A549 (cell line): ENCODE measurements at regions of chr1 and their contacts with region 1.

Region 1: DNA sequence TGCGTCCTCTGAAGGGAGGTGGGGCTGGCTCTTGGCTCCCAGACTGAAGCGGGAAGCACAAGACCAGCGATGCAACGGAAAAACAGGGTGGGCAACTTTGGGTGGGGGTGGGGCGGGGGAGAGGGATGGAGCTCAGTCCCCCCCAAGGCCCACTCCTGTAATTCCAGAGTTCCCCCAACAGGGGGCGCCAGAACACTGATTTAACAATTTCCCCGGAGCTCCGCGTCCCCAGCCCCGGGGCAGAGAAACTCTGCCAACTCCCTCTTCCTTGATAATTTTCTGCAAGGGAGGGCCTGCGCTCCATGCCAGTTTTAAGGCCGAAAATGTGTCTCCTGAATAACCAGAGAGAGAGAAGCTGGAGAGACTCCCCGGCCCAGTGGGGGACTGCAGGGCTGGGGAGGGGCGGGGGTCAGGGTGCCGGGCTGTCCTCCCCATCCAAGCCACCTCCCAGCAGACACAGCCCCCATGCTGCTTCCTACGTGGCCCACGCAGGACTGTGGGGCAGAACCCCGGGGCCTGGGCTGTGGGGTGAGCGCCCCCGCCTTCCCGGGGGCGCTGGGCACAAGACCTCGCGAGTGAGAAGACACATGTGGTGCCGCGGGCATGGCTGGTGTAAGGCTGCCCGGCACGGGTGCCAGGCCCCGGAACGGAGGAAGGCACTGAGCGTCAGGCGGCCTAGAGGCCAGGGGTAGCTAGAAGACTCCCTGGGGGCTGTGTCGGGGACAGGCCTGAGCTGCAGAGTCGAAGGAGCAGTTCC is 51.4 kb downstream of the KIF21B start:
- DNase-seq: peak; percentile 37 to 76
- ATAC-seq: peak in 1 of 2 experiments; percentile 47; a peak in 3 of 6 replicates
- H3K4me3 ChIP-seq: no peak overlapping the region
- H3K27ac ChIP-seq: peak overlapping the region; percentile 63 to 76
- H3K4me1 ChIP-seq: peaks cover 31% of the 10 kb centered on the region
- CTCF ChIP-seq: peak; percentile 89
- EP300 ChIP-seq: no peak
- POLR2A ChIP-seq: no peak
- RAD21 ChIP-seq: peak; percentile 77 to 90

Region 2: GRCh38 chr1:200620273-200621131 is 351.6 kb before region 1 on chr1 and contains the start of gene KIF14:
- CTCF ChIA-PET with region 1: interaction called, 16 read pairs
- POLR2A ChIA-PET with region 1: interaction called, 3 read pairs
- DNase-seq: peak; percentile 93 to 97
- ATAC-seq: peak; percentile 99 to 100
- H3K4me3 ChIP-seq: peak within 1 kb of the TSS; percentile 86
- H3K27ac ChIP-seq: peak within 1 kb of the TSS; percentile 79 to 91
- H3K4me1 ChIP-seq: peaks cover 12% of the 10 kb centered on the region; the same call in 2 of the 3 replicates
- CTCF ChIP-seq: no peak
- EP300 ChIP-seq: no peak
- POLR2A ChIP-seq: no peak
- RAD21 ChIP-seq: no peak
- polyA plus RNA-seq, gene KIF14: 13.5 and 20.4 TPM in 2 replicates

Region 3: DNA sequence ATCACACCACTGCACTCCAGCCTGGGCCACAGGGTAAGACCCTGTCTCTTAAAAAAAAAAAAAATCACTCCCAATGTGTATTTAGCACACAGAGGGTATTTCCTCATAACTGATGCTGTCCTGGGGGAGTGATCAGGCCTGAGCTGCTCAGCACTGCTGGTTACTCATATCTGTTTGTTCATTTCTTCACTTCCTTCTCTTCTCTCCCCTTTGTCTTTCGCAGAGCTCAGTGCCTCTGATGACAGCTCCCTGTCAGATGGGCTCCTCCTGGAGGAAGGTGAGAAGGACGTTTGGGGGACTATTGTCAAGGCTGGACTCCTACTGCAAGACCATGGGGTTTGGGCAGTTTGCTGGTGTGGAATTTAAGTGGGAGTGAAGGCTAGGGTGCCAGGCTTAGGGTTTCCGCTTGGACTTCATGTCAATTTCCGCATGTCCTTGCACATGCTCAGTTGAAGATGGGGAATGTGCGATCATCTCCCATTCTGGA is 64.5 kb before region 1 on chr1:
- CTCF ChIA-PET with region 1: interaction called, 10 read pairs
- POLR2A ChIA-PET with region 1: no interaction called
- DNase-seq: peak in 1 of 2 experiments; percentile 79
- ATAC-seq: peak; percentile 82 to 91
- H3K4me3 ChIP-seq: no peak overlapping the region
- H3K27ac ChIP-seq: peak overlapping the region; percentile 77 to 82
- H3K4me1 ChIP-seq: peaks cover 76% of the 10 kb centered on the region
- CTCF ChIP-seq: no peak
- EP300 ChIP-seq: peak in 1 of 2 experiments; percentile 48; a peak in 1 of 5 replicates
- POLR2A ChIP-seq: no peak
- RAD21 ChIP-seq: no peak; a peak in 2 of 5 replicates

Region 4: GRCh38 chr1:200951016-200951415 is 21.1 kb before region 1 on chr1:
- CTCF ChIA-PET with region 1: interaction called, 23 read pairs
- POLR2A ChIA-PET with region 1: no interaction called
- DNase-seq: no peak
- ATAC-seq: no peak
- H3K4me3 ChIP-seq: no peak overlapping the region
- H3K27ac ChIP-seq: no peak overlapping the region
- H3K4me1 ChIP-seq: no peaks in the 10 kb centered on the region
- CTCF ChIP-seq: no peak
- EP300 ChIP-seq: no peak
- POLR2A ChIP-seq: no peak
- RAD21 ChIP-seq: no peak

Region 5: GRCh38 chr1:201006450-201006849 is 34.3 kb after region 1 on chr1:
- CTCF ChIA-PET with region 1: interaction called, 21 read pairs
- POLR2A ChIA-PET with region 1: no interaction called
- DNase-seq: peak in 1 of 2 experiments; percentile 21
- ATAC-seq: peak in 1 of 2 experiments; percentile 36; a peak in 2 of 6 replicates
- H3K4me3 ChIP-seq: no peak overlapping the region
- H3K27ac ChIP-seq: no peak overlapping the region
- H3K4me1 ChIP-seq: no peaks in the 10 kb centered on the region
- CTCF ChIP-seq: no peak
- EP300 ChIP-seq: no peak
- POLR2A ChIP-seq: no peak
- RAD21 ChIP-seq: no peak

Region 6: DNA sequence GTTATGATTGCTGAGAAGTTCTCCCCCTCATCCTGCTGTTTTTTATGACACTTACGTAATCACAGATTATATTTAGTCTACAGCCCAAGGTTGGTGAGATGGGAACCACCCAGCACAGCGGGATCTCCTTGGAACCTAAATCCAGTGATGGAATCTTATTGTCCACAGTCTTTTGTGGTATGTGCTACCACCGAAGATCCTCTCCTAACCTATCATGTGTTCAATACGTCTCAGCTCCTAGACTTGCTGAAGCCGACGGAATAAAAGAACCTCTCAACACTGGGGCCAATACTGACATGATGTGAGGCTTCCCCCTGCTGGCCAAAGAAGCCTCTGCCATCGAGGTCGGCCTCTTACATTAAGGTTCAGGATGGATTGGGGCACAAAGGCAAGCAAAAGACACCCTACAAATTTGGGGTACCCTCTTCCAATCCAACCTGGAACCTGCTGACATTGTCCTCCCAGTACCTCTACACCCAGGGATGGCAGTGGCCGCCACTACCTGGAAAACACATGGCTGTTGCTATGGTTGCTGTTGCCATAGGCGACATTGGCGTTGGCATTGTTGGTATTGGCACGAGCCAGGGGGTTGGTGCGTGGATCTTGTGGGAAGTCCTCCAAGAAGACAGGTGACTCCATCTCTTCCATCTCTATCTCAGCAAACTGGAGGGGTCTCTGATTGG is 70.8 kb after region 1 on chr1:
- CTCF ChIA-PET with region 1: interaction called, 82 read pairs
- POLR2A ChIA-PET with region 1: no interaction called
- DNase-seq: peak; percentile 67 to 78
- ATAC-seq: peak; percentile 85 to 94
- H3K4me3 ChIP-seq: no peak overlapping the region
- H3K27ac ChIP-seq: peak overlapping the region in 1 of 2 experiments; percentile 27; a peak in 3 of 6 replicates
- H3K4me1 ChIP-seq: 0 out of 3 replicates have a peak, but pooled peaks cover 3% of the 10 kb centered on the region
- CTCF ChIP-seq: peak; percentile 91
- EP300 ChIP-seq: no peak
- POLR2A ChIP-seq: no peak
- RAD21 ChIP-seq: peak; percentile 94 to 96

Region 7: DNA sequence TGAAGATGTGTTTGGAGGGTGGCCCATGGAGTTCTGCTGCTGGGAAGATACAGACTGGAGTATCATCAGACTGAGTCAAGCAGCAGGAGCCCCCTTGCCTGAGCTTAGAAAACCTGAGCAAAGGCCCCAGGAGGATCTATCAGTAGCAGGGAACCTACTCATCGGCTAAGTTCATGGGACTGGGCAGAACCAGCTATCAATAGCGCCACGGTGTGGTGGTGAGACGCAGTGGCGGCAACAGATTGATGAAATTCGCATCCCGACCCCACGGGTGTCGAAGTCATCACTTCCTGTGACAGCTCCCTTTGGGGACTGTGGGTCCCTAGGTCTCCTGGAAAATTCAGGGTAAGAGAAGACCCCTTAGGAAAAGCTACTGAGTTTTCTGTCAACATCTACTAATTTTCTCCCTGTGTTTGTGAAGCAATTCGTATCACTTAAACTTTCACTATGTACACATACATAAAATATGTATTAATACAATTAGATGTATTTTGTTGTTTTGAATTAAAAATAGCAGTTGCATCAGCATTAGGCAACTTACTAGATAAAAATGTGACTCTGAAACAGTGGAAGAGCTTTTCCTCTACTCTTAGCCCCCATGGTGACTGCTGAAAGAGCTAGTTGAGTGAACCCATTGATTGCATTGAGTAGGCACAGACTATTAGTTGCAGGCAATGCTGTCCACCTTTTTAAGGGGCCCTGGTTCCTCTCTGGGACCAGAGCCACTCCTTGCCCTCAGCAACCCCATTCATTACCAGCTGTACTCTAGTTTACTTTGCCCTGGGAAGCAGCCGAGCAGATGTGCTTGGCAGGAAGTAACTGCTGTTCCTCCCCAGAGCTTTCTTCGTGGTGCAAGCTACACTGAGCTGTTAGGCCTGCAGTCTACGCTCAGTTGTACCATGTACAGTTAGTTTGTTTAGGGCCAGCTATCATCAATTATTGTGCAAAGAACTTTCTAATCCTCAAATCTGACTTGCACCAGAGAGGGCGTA is 147.4 kb after region 1 on chr1:
- CTCF ChIA-PET with region 1: interaction called, 30 read pairs
- POLR2A ChIA-PET with region 1: interaction called, 9 read pairs
- DNase-seq: peak; percentile 62 to 71
- ATAC-seq: peak in 1 of 2 experiments; percentile 63; a peak in 3 of 6 replicates
- H3K4me3 ChIP-seq: no peak overlapping the region
- H3K27ac ChIP-seq: no peak overlapping the region
- H3K4me1 ChIP-seq: peaks cover 9% of the 10 kb centered on the region; the same call in 2 of the 3 replicates
- CTCF ChIP-seq: peak; percentile 65
- EP300 ChIP-seq: no peak
- POLR2A ChIP-seq: no peak
- RAD21 ChIP-seq: peak; percentile 45 to 57